ENCODE measurements at regions of chr3 and their contacts with region 1.

Region 1: DNA sequence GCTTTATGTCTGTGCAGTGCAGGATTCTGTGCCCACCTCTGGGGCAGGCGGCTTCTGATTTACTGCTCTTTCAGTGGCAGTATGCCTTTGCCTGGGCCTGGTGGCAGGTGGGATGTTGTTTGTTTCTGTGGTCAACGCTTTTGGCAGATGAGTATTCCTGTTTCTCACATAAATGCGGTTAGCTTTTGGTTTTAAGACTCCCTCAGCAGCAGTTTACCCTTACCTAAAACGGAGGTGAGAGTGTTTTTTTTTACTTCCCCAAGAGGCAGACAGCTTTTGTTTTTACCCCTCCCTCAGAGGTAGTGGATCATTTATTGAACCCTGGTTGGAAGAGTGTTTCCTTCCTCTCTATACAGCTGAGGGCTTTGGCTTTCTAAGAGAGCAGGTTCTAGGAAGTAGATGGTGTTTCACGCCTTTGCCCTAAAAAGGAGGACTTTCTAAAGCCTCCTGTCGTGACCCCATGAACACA is 134.1 kb upstream of the PLSCR5 start:
- DNase-seq: no peak
- ATAC-seq: no peak

Region 2: GRCh38 chr3:146772211-146772743 is 33.0 kb after region 1 on chr3:
- intact Hi-C with region 1: no loop called
- DNase-seq: no peak
- ATAC-seq: no peak

Region 3: GRCh38 chr3:147449669-147450068 is 710.4 kb after region 1 on chr3:
- intact Hi-C with region 1: loop called (anchors 5 kb)
- DNase-seq: no peak
- ATAC-seq: no peak

Measured in sciatic nerve (tissue), 2 donors.